ENCODE measurements at regions of chr6 and their contacts with region 1.

Region 1: GRCh38 chr6:130885392-130886192 is 58.4 kb downstream of the SMLR1 start:
- DNase-seq: peak; percentile 65 to 67
- H3K4me3 ChIP-seq: no peak overlapping the region
- H3K27ac ChIP-seq: no peak overlapping the region
- H3K4me1 ChIP-seq: no peaks in the 10 kb centered on the region
- H3K27me3 ChIP-seq: no peaks in the 10 kb centered on the region
- CTCF ChIP-seq: peak; percentile 71 to 95 (median 84)
- POLR2A ChIP-seq: no peak

Region 2: DNA sequence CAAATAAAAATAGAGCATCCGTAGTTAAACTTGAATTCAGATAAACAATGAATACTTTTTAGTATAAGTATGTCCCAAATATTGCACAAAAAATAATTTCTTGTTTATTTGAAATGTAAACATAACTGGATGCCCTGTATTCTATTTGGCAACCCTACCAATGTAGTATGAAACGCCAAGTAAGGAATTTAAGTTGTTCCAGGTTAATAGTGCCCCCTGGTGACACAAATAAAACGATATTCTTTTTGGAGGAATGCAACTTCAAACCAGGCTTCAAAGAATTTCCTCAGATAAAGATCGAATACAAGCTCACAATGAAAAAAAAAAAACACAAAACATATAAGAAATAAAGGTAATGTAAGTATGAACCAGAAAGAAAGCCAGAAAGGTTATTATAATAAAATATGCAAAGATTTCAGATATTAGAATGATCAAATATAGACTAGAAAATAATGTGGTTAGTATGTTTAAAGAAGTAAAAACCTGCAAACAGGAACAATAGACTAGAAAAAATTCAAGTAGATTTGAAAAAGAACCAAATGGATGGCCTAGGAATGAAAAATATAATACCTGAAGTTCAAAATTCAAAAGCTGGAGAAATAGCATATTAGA is 231.3 kb after region 1 on chr6:
- intact Hi-C with region 1: loop called (anchors 2 kb)
- DNase-seq: no peak
- H3K4me3 ChIP-seq: no peak overlapping the region
- H3K27ac ChIP-seq: no peak overlapping the region
- H3K4me1 ChIP-seq: no peaks in the 10 kb centered on the region
- H3K27me3 ChIP-seq: no peaks in the 10 kb centered on the region
- CTCF ChIP-seq: peak in 4 of 6 experiments; percentile 20 to 66 (median 48)
- POLR2A ChIP-seq: no peak